OCI-LY7 (cell line): ENCODE measurements at regions of chr9 and their contacts with region 1.

Region 1: GRCh38 chr9:134171316-134172197 is 7.2 kb upstream of the RNU6ATAC start:
- DNase-seq: no peak
- H3K4me3 ChIP-seq: no peak overlapping the region
- H3K27ac ChIP-seq: no peak overlapping the region
- H3K4me1 ChIP-seq: peaks cover 18% of the 10 kb centered on the region
- CTCF ChIP-seq: no peak

Region 2: GRCh38 chr9:134158753-134159392 is 12.7 kb before region 1 on chr9:
- CTCF ChIA-PET with region 1: no interaction called
- POLR2A ChIA-PET with region 1: no interaction called
- intact Hi-C with region 1: no loop called
- DNase-seq: no peak
- H3K4me3 ChIP-seq: no peak overlapping the region
- H3K27ac ChIP-seq: no peak overlapping the region
- H3K4me1 ChIP-seq: peaks cover 5% of the 10 kb centered on the region
- CTCF ChIP-seq: no peak

Region 3: GRCh38 chr9:134217832-134218629 is 46.5 kb after region 1 on chr9:
- CTCF ChIA-PET with region 1: interaction called, 4 read pairs
- POLR2A ChIA-PET with region 1: no interaction called
- intact Hi-C with region 1: loop called (anchors 5 kb)
- DNase-seq: peak; percentile 64
- H3K4me3 ChIP-seq: no peak overlapping the region
- H3K27ac ChIP-seq: no peak overlapping the region
- H3K4me1 ChIP-seq: peaks cover 52% of the 10 kb centered on the region
- CTCF ChIP-seq: peak; percentile 73

Region 4: DNA sequence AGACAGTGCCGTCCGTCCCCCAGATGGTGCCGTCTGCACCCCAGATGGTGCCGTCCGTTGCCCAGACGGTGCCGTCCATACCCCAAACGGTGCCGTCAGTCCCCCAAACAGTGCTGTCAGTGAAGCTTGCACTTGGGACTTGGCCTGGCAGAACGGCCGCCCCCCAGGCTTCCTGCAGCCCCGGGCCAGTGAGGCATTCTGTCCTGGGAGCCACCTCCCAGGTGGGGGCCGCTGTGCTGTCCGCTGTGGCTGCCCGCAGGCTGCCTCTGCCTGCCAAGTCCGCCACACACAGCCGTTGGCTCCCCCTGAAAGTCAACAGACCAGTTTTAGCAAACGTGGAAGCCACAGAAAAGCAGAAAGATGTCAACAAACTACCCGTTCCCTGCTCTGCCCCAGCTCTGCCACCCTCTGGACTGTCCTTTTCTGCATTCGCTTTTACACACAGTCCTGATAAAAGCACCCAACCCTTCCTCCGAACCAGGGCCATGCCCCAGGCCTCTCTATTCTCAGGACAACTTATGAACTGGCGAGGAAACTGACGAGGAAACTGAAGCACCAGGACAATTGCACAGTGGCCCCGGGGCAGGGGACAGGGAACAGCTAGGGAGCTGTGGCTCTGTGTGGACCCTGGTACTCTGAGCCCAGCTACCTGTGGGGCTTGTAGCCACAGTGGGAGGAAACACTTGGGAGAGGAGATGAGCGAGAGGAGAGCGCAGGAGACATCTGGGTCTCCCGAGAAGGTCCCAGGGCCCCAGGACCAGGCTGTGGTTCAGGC is 115.1 kb after region 1 on chr9:
- CTCF ChIA-PET with region 1: no interaction called
- POLR2A ChIA-PET with region 1: no interaction called
- intact Hi-C with region 1: loop called (anchors 5 kb)
- DNase-seq: no peak
- H3K4me3 ChIP-seq: no peak overlapping the region
- H3K27ac ChIP-seq: no peak overlapping the region
- H3K4me1 ChIP-seq: no peaks in the 10 kb centered on the region
- CTCF ChIP-seq: no peak

Region 5: DNA sequence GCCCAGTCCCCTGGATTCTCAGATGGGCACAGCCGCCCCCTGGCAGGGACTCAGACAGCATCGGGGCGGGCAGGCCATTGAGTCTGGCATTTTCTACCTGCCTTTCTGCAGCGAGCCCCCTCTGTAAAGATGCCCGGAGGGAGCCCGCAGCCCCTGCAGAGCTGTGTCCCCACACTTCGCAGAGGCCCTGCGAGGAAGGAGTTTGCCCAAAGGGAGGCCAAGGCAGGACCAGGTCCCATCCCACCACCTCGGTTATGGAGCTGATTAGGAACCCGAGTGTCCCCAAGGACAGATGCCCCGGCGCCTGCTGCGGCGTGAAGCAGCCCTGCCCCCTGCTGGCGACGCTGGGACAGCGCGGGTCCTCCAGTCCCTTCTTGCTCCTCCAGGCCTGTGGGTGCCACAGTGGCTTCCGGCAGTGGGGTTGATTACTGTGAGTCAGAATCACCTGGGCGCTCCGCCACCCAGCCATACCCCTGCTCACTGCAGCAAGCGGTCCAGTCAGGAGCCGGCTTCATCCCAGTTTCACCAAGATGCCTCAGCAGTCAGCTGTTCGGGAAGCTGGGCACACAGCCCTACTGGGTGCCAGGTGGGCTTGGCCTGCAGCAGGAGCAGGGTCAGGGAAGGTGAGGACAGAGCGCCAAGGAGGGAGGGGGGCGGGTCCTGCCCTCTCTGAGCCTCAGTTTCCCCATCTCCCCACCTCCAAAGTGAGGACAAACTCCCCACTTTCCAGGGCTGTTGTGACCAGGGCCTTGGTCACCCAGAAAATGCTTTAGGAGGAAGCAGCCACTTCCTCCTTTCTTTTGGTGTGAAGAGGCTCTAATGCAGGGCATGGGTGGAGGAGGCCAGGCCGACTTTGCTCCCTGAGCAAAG is 271.8 kb after region 1 on chr9:
- CTCF ChIA-PET with region 1: no interaction called
- POLR2A ChIA-PET with region 1: no interaction called
- intact Hi-C with region 1: loop called (anchors 1 kb)
- DNase-seq: peak; percentile 77
- H3K4me3 ChIP-seq: no peak overlapping the region
- H3K27ac ChIP-seq: no peak overlapping the region
- H3K4me1 ChIP-seq: peaks cover 3% of the 10 kb centered on the region
- CTCF ChIP-seq: peak; percentile 93